Heart right ventricle (tissue), 16 donors: ENCODE measurements at regions of chr20 and their contacts with region 1.

Region 1: GRCh38 chr20:23079016-23079351 is 7.1 kb downstream of the CD93 start:
- DNase-seq: no peak
- ATAC-seq: no peak
- H3K4me3 ChIP-seq: no peak overlapping the region
- H3K27ac ChIP-seq: no peak overlapping the region
- H3K4me1 ChIP-seq: peaks cover 0 to 54% (median 31%) of the 10 kb centered on the region in 9 donors
- H3K27me3 ChIP-seq: no peaks in the 10 kb centered on the region
- CTCF ChIP-seq: peak in 1 of 9 donors; percentile 31

Region 2: GRCh38 chr20:22805219-22805618 is 273.8 kb before region 1 on chr20:
- intact Hi-C with region 1: no loop called
- DNase-seq: peak in 1 of 2 donors; percentile 54
- ATAC-seq: peak; percentile 61 to 86 (median 71)
- H3K4me3 ChIP-seq: no peak overlapping the region
- H3K27ac ChIP-seq: peak overlapping the region in 1 of 10 donors; percentile 21
- H3K4me1 ChIP-seq: peaks cover 0 to 32% (median 0%) of the 10 kb centered on the region in 9 donors
- H3K27me3 ChIP-seq: peaks cover 0 to 12% (median 0%) of the 10 kb centered on the region in 7 donors
- CTCF ChIP-seq: no peak

Region 3: GRCh38 chr20:23061734-23062561 is 17.0 kb before region 1 on chr20:
- intact Hi-C with region 1: no loop called
- DNase-seq: peak; percentile 44 to 69
- ATAC-seq: peak; percentile 82 to 90 (median 86)
- H3K4me3 ChIP-seq: peak overlapping the region in 1 of 10 donors; percentile 18
- H3K27ac ChIP-seq: peak overlapping the region in 9 of 10 donors; percentile 46 to 84 (median 77)
- H3K4me1 ChIP-seq: peaks cover 22 to 51% (median 47%) of the 10 kb centered on the region in 9 donors
- H3K27me3 ChIP-seq: no peaks in the 10 kb centered on the region
- CTCF ChIP-seq: peak; percentile 26 to 72 (median 53)

Region 4: DNA sequence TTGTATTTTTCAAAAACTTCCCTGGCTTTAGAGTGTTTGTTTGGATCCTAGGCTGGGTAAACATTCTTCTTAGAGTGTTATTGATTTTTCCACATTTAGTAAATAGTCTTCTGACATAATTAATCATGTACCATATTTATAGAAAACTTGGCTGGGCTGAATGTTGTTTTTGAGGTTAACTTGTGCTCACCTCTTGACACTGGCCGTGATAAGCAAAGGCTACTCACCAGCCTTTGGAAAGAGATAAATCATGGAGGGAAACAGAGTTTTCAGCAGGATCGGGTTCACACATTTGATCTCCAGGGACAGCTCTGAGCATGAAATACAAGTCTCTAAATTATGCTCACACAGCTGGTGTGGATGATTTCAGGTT is 13.4 kb after region 1 on chr20:
- intact Hi-C with region 1: no loop called
- DNase-seq: no peak
- ATAC-seq: peak in 1 of 8 donors; percentile 16
- H3K4me3 ChIP-seq: no peak overlapping the region
- H3K27ac ChIP-seq: peak overlapping the region in 4 of 10 donors; percentile 31 to 67 (median 42)
- H3K4me1 ChIP-seq: peaks cover 9 to 61% (median 24%) of the 10 kb centered on the region in 9 donors
- H3K27me3 ChIP-seq: no peaks in the 10 kb centered on the region
- CTCF ChIP-seq: no peak

Region 5: DNA sequence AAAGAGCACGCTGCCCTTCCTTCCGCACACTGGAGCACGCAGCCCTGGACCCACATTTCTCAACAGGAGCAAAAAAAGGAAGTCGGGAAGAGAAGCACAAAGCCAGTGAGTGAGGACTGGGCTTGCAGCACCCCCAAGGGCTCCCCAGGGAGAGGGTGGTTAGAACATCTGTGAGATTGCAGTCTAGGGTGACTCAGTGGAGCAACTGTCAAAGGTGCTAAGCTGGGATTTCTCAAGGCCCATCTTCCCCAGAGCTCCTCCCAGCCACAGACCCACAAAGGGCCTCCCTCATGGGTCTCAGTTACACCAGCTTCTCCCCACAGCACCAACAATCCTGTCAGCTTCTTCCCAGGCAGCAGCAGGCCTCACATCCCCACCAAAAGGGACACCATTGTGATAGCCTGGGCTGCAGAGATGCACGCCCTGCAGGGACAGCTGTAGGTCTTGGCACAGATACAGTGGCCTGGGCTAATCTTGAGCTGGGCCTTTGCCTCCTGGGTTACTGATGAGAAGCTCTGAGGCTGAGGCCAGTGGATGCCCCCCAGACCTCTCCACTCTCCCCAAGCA is 46.7 kb after region 1 on chr20:
- intact Hi-C with region 1: loop called in 3 of 10 experiments (anchors 5 to 10 kb)
- DNase-seq: no peak
- ATAC-seq: peak in 7 of 8 donors; percentile 45 to 71 (median 61)
- H3K4me3 ChIP-seq: no peak overlapping the region
- H3K27ac ChIP-seq: peak overlapping the region in 5 of 10 donors; percentile 39 to 87 (median 64)
- H3K4me1 ChIP-seq: peaks cover 2 to 65% (median 38%) of the 10 kb centered on the region in 9 donors
- H3K27me3 ChIP-seq: no peaks in the 10 kb centered on the region
- CTCF ChIP-seq: no peak